Mucosa of descending colon (tissue), 3 donors: ENCODE measurements at regions of chr16 and their contacts with region 1.

Region 1: DNA sequence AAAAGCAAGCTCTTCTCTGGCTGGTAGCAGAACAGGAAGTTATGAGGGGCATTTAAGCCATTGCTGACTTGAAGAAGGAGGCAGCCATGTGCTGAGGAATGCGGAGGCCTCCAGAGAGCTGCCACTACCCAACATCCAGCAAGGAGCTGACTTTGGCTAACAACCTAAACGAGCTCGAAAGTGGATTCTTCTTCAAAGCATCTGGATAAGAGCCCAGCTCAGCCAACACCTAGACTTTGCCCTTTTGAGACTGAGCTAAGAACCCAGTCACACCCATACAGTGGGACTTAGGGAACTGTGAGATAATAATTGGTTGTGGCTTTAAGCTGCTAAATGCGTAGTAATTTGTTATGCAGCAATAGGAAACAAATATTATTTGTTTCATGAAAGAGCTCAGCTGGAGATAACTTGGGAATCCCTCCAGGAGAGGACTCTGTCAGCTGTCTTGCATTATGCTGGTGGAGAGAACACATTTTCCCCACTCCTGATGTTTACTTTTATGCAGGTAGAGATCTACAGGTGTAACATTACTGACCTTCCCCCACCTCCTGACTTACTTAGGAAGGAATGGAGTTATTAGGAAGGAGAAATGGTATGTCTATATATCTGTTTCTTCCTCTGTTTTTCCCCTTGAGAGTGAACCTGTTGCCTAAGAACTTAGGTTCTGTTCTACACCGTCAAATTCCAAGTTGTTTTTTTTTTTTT is 52.7 kb upstream of the ZNF629 start:
- DNase-seq: peak in 2 of 3 donors; percentile 46 to 73
- ATAC-seq: peak; percentile 95
- H3K4me3 ChIP-seq: no peak overlapping the region
- H3K4me1 ChIP-seq: peaks cover 22% of the 10 kb centered on the region
- CTCF ChIP-seq: no peak

Region 2: GRCh38 chr16:30910427-30911029 is 70.9 kb after region 1 on chr16:
- intact Hi-C with region 1: loop called in 1 of 2 experiments (anchors 5 kb)
- DNase-seq: no peak
- ATAC-seq: no peak
- H3K4me3 ChIP-seq: no peak overlapping the region
- H3K4me1 ChIP-seq: no peaks in the 10 kb centered on the region
- CTCF ChIP-seq: no peak